CD8-positive, alpha-beta T cell (primary cell): ENCODE measurements at regions of chr11 and their contacts with region 1.

Region 1: DNA sequence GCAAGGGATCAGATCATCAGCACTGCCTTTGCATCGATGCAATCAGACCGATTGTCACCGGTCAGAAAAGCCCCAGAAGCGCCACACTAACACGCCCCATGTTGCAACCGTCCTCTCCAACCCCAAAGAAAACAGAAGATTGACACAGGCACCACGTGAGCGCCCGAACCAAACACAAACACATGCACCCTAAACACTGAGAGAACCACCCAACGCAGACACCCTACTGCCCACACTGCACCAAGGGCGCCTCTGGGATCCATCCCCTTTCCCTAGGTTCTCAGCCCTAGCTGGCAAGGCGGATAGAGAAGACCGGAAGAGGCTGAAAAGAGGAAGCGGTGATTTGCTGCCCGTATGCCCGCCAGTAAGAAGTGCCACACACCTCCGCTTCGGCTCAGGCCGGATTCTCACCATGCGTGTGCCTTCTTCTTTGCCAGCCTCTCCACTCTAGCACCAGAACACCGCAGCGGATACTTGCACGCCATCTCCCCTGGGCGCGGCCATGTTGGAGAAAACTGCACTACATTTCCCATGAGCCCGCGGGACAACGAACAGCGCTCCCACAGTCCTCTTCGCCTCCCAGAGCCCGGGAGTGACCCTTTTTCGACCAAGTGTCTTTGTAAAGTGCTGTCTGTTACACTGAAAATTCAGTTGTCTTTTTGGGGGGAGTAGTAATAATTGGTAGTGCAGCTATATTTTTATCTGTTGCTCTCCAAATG is at the start of gene ALKBH8:
- DNase-seq: peak; percentile 51 to 88 (median 80)
- ATAC-seq: peak; percentile 93
- H3K4me3 ChIP-seq: peak within 1 kb of the TSS; percentile 72 to 87
- H3K4me3 Mint-ChIP-seq: peak within 1 kb of the TSS; percentile 92
- H3K27ac ChIP-seq: peak within 1 kb of the TSS; percentile 69 to 77
- H3K27ac Mint-ChIP-seq: peak within 1 kb of the TSS; percentile 92
- H3K4me1 ChIP-seq: peaks cover 24% of the 10 kb centered on the region
- H3K4me1 Mint-ChIP-seq: peaks cover 58% of the 10 kb centered on the region
- H3K27me3 ChIP-seq: no peaks in the 10 kb centered on the region
- H3K27me3 Mint-ChIP-seq: no peaks in the 10 kb centered on the region
- CTCF ChIP-seq: no peak
- total RNA-seq, gene ALKBH8: 10.2 to 11.8 TPM

Region 2: DNA sequence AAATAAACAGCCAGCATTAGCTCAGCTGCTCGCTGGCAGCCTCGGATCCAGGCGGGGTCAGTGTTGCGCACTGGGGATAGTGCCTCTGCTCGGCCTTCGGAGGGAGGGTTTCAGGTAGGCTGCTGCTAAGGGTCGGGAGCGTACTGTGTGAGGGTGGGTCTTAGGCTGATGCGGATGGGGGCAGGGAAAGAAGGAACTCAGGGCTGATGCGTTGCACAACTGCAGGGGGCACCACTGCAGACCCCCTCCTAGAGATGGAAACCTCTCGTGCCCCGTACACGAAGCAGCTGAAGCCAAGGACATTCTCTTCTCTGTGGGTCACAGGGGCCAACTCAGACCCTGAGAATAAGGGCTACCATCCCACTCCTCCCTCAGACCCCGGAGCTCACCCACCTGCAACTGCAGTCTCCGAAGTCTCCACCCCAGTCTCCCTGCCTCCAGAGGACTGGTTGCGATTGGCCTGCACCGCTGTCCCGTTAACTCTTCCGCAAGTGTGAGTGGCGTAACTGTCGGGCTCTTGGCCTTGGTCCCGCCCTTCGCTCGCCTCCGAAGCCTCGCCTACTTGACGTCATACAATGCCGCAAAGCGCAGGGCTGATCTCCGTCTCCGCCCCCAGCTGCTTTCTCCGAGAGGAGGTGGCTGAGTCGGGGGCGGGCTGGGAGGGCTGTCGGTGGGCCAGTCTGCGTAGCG is 1488.3 kb before region 1 on chr11 and contains the start of gene KBTBD3:
- CTCF ChIA-PET with region 1: no interaction called
- POLR2A ChIA-PET with region 1: no interaction called
- intact Hi-C with region 1: loop called in 1 of 2 experiments (anchors 5 kb)
- DNase-seq: peak; percentile 97 to 100 (median 98)
- ATAC-seq: peak; percentile 91
- H3K4me3 ChIP-seq: peak within 1 kb of the TSS; percentile 88 to 95
- H3K4me3 Mint-ChIP-seq: peak within 1 kb of the TSS; percentile 98
- H3K27ac ChIP-seq: peak within 1 kb of the TSS; percentile 87 to 89
- H3K27ac Mint-ChIP-seq: peak within 1 kb of the TSS; percentile 99
- H3K4me1 ChIP-seq: peaks cover 48% of the 10 kb centered on the region
- H3K4me1 Mint-ChIP-seq: peaks cover 69% of the 10 kb centered on the region
- H3K27me3 ChIP-seq: no peaks in the 10 kb centered on the region
- H3K27me3 Mint-ChIP-seq: no peaks in the 10 kb centered on the region
- CTCF ChIP-seq: peak; percentile 62
- total RNA-seq, gene KBTBD3: 3.3 to 6.7 TPM

Region 3: DNA sequence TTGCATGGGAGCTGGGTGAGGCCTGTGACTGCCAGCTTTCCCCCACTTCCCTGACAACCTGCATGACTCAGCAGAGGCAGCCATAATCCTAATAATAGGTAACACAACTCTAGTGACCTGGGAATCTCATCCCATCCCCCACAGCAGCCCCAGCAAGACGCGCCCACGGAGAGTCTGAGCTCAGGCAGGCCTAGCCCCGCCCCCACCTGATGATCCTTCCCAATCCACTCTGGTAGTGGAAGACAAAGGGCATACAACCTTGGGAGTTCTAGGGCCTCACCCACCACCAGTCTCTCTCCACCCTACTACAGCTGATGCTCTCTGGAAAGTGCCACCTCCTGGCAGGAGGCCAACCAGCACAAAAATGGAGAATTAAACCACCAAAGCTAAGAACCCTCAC is 168.0 kb before region 1 on chr11:
- CTCF ChIA-PET with region 1: no interaction called
- POLR2A ChIA-PET with region 1: no interaction called
- intact Hi-C with region 1: no loop called
- DNase-seq: no peak
- ATAC-seq: no peak
- H3K4me3 ChIP-seq: no peak overlapping the region
- H3K4me3 Mint-ChIP-seq: no peak overlapping the region
- H3K27ac ChIP-seq: no peak overlapping the region
- H3K27ac Mint-ChIP-seq: no peak overlapping the region
- H3K4me1 ChIP-seq: no peaks in the 10 kb centered on the region
- H3K4me1 Mint-ChIP-seq: peaks cover 3% of the 10 kb centered on the region
- H3K27me3 ChIP-seq: no peaks in the 10 kb centered on the region
- H3K27me3 Mint-ChIP-seq: no peaks in the 10 kb centered on the region
- CTCF ChIP-seq: no peak

Region 4: DNA sequence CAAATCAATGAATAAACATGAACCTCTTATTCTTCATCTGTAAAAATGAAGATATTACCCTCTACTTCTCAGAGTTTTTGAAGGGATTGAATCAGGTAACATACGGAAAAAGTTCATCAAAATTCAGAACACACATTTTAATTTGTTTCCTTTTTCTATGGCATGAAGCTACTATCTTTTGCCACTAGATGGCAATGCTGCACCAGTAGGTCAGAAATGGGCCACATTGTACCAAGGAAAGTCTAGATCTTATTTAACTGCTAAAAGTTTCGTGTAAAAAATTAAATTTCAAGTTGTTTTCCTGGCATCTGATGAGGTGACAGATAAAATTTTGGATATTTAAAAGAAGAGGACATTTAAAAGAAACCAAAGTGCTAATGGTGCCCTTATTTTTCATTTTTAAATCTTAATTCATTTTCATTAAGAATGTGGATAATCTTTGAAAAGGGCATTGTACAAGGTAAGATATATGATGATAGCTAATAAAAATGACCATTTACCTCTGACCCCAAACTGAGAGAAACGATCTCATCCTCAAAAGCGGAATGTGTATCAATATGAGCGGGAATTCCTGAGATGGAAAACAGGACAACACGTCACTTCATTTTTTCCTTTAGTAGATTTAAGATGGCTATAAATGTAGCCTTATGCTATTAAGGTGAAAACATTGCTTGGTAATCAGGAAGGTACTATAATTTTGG is 16.0 kb before region 1 on chr11:
- CTCF ChIA-PET with region 1: interaction called, 62 read pairs
- POLR2A ChIA-PET with region 1: interaction called, 3 read pairs
- intact Hi-C with region 1: loop called in 1 of 2 experiments (anchors 2 kb)
- DNase-seq: peak in 4 of 9 experiments; percentile 19 to 65 (median 42)
- ATAC-seq: peak; percentile 64
- H3K4me3 ChIP-seq: no peak overlapping the region
- H3K4me3 Mint-ChIP-seq: no peak overlapping the region
- H3K27ac ChIP-seq: no peak overlapping the region
- H3K27ac Mint-ChIP-seq: no peak overlapping the region
- H3K4me1 ChIP-seq: no peaks in the 10 kb centered on the region
- H3K4me1 Mint-ChIP-seq: peaks cover 2% of the 10 kb centered on the region
- H3K27me3 ChIP-seq: no peaks in the 10 kb centered on the region
- H3K27me3 Mint-ChIP-seq: no peaks in the 10 kb centered on the region
- CTCF ChIP-seq: peak; percentile 97

Region 5: DNA sequence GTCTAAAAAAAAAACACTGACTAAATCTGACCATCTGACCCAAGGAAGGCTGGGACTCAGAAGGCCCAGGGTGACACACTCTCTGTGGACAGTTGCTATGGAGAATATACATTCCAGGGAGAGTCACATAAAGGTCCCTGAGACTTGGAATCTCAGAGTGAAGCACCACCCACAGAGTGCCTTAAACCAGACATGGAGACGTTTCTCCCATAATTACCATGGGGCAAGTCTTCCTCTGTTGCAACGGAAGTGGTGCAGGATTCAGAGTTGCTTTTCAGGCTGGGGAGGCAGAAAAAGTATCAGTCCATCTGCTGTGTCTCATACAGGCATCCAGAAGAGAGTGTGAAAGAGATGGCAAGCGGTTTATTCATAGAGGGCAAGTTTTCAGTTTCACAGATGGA is 205.2 kb after region 1 on chr11:
- CTCF ChIA-PET with region 1: interaction called, 3 read pairs
- POLR2A ChIA-PET with region 1: no interaction called
- intact Hi-C with region 1: loop called in 1 of 2 experiments (anchors 5 kb)
- DNase-seq: no peak
- ATAC-seq: no peak
- H3K4me3 ChIP-seq: no peak overlapping the region
- H3K4me3 Mint-ChIP-seq: no peak overlapping the region
- H3K27ac ChIP-seq: no peak overlapping the region
- H3K27ac Mint-ChIP-seq: no peak overlapping the region
- H3K4me1 ChIP-seq: no peaks in the 10 kb centered on the region
- H3K4me1 Mint-ChIP-seq: no peaks in the 10 kb centered on the region
- H3K27me3 ChIP-seq: no peaks in the 10 kb centered on the region
- H3K27me3 Mint-ChIP-seq: peaks cover 10% of the 10 kb centered on the region
- CTCF ChIP-seq: no peak

Region 6: GRCh38 chr11:108008656-108009496 is 443.5 kb after region 1 on chr11 and contains the start of gene CUL5:
- CTCF ChIA-PET with region 1: interaction called, 3 read pairs
- POLR2A ChIA-PET with region 1: interaction called, 5 read pairs
- intact Hi-C with region 1: loop called (anchors 2 to 10 kb)
- DNase-seq: peak; percentile 83 to 95 (median 89)
- ATAC-seq: peak; percentile 88
- H3K4me3 ChIP-seq: peak within 1 kb of the TSS; percentile 99
- H3K4me3 Mint-ChIP-seq: no peak within 1 kb of the TSS
- H3K27ac ChIP-seq: peak within 1 kb of the TSS; percentile 97 to 98
- H3K27ac Mint-ChIP-seq: peak within 1 kb of the TSS; percentile 98
- H3K4me1 ChIP-seq: peaks cover 24% of the 10 kb centered on the region
- H3K4me1 Mint-ChIP-seq: peaks cover 3% of the 10 kb centered on the region
- H3K27me3 ChIP-seq: no peaks in the 10 kb centered on the region
- H3K27me3 Mint-ChIP-seq: no peaks in the 10 kb centered on the region
- CTCF ChIP-seq: peak; percentile 70
- total RNA-seq, gene CUL5: 73.3 to 75.0 TPM